Pancreas (tissue), 10 donors: ENCODE measurements at regions of chr6 and their contacts with region 1.

Region 1: GRCh38 chr6:36765594-36766398 is 68.2 kb downstream of the RAB44 start:
- DNase-seq: peak; percentile 73 to 90 (median 85)
- ATAC-seq: peak; percentile 86 to 95 (median 94)
- H3K4me3 ChIP-seq: no peak overlapping the region
- H3K27ac ChIP-seq: no peak overlapping the region
- H3K4me1 ChIP-seq: peaks cover 0 to 5% (median 0%) of the 10 kb centered on the region in 3 donors
- H3K27me3 ChIP-seq: no peaks in the 10 kb centered on the region
- CTCF ChIP-seq: peak; percentile 77 to 85 (median 80)

Region 2: GRCh38 chr6:36848658-36849441 is 83.1 kb after region 1 on chr6:
- intact Hi-C with region 1: loop called in 2 of 3 experiments (anchors 5 kb)
- DNase-seq: peak; percentile 74 to 84 (median 78)
- ATAC-seq: peak; percentile 89 to 95 (median 93)
- H3K4me3 ChIP-seq: peak overlapping the region in 2 of 4 donors; percentile 25 to 34
- H3K27ac ChIP-seq: peak overlapping the region in 3 of 4 donors; percentile 23 to 36 (median 23)
- H3K4me1 ChIP-seq: peaks cover 0 to 4% (median 0%) of the 10 kb centered on the region in 3 donors
- H3K27me3 ChIP-seq: no peaks in the 10 kb centered on the region
- CTCF ChIP-seq: no peak

Region 3: GRCh38 chr6:37207903-37208456 is 442.2 kb after region 1 on chr6:
- intact Hi-C with region 1: loop called in 2 of 3 experiments (anchors 10 kb)
- DNase-seq: peak; percentile 67 to 89 (median 84)
- ATAC-seq: peak; percentile 53 to 83 (median 81)
- H3K4me3 ChIP-seq: no peak overlapping the region
- H3K27ac ChIP-seq: no peak overlapping the region
- H3K4me1 ChIP-seq: no peaks in the 10 kb centered on the region
- H3K27me3 ChIP-seq: no peaks in the 10 kb centered on the region
- CTCF ChIP-seq: peak; percentile 25 to 67 (median 52)